Mammary epithelial cell (primary cell): ENCODE measurements at regions of chr16 and their contacts with region 1.

Region 1: GRCh38 chr16:74275002-74275636 is 21.5 kb upstream of the PSMD7 start:
- DNase-seq: no peak
- H3K4me3 ChIP-seq: no peak overlapping the region
- H3K27ac ChIP-seq: no peak overlapping the region
- H3K4me1 ChIP-seq: no peaks in the 10 kb centered on the region
- H3K27me3 ChIP-seq: no peaks in the 10 kb centered on the region
- CTCF ChIP-seq: peak; percentile 42 to 65

Region 2: GRCh38 chr16:74064120-74064735 is 210.9 kb before region 1 on chr16:
- CTCF ChIA-PET with region 1: interaction called, 3 read pairs
- dilution Hi-C with region 1: no loop called
- in situ Hi-C with region 1: no loop called
- intact Hi-C with region 1: loop called (anchors 1 kb)
- DNase-seq: no peak
- H3K4me3 ChIP-seq: no peak overlapping the region
- H3K27ac ChIP-seq: no peak overlapping the region
- H3K4me1 ChIP-seq: no peaks in the 10 kb centered on the region
- H3K27me3 ChIP-seq: no peaks in the 10 kb centered on the region
- CTCF ChIP-seq: peak in 1 of 2 donors; percentile 46

Region 3: GRCh38 chr16:74216319-74216718 is 58.8 kb before region 1 on chr16:
- CTCF ChIA-PET with region 1: no interaction called
- dilution Hi-C with region 1: no loop called
- in situ Hi-C with region 1: no loop called
- intact Hi-C with region 1: no loop called
- DNase-seq: no peak
- H3K4me3 ChIP-seq: no peak overlapping the region
- H3K27ac ChIP-seq: no peak overlapping the region
- H3K4me1 ChIP-seq: no peaks in the 10 kb centered on the region
- H3K27me3 ChIP-seq: no peaks in the 10 kb centered on the region
- CTCF ChIP-seq: no peak

Region 4: DNA sequence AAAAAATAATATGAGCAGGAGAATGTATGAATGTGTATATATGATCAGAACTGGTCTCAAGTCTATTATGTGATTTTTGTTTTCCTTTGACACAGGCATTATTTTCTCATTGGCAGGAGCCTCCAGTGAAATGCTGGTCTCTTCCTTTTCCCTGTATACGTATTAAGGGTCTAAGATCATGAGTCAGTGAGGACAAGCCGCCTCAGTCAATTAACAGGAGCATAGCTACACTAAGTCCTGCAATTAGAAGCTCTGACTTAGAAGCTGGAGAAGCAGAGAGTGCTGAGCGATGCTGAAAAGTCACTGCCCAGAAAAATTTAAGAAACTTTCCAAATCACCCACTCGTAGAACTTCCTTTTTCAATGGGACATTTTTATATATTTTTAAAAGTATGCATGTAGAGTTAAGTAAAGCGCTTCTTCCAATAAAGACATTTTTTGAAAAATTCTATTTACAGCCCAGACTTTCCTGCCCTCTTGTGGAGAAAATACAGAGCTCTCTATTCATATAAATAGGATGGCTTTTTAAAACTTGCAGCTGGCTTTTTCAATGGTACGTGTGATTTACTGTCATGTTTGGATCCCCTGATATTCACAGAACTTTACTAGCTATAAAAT is 48.7 kb before region 1 on chr16:
- CTCF ChIA-PET with region 1: no interaction called
- dilution Hi-C with region 1: no loop called
- in situ Hi-C with region 1: no loop called
- intact Hi-C with region 1: loop called (anchors 2 kb)
- DNase-seq: no peak
- H3K4me3 ChIP-seq: no peak overlapping the region
- H3K27ac ChIP-seq: no peak overlapping the region
- H3K4me1 ChIP-seq: no peaks in the 10 kb centered on the region
- H3K27me3 ChIP-seq: peaks cover 2% of the 10 kb centered on the region
- CTCF ChIP-seq: peak; percentile 24 to 52